Heart right ventricle (tissue), 16 donors: ENCODE measurements at regions of chrX and their contacts with region 1.

Region 1: DNA sequence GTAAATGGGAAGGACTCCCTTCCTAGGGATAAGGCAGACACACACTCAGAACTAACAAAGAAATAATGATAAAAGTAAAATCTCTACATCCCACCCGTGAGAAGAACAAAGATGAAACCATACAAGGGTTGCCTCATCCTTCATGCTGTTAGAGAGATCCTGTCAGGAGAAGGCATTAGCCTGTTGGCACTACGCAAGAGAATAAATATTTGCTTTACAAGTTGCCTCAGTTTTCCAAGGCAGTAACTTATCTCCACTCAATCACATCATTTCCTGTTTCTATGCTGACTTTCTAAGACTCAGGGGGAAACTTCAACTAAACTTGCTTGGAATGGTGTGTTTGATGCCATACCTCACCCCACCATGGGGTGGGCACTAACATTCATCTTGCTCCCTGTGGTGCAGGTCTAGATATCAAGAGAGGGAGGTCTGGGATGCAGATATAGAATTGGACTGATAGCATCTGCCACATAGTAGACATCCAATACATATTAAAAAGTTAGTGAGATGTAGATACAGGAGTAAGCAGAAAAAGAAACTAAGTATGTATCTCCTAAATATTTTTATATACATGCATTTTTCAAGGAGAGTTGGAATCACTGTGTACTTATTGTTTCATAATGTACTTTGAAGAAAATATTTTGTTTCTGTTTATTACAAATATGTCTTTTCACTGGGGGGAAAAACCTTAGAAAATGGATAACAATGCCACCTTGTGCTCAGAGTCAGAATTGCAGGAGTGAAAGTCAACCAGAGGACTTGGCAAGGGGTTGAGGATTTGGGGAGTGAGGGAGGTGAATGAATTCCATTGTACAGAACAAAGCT is 57.2 kb upstream of the BEX4 start:
- DNase-seq: peak in 1 of 2 donors; percentile 13
- ATAC-seq: no peak
- H3K4me3 ChIP-seq: no peak overlapping the region
- H3K27ac ChIP-seq: no peak overlapping the region
- H3K4me1 ChIP-seq: no peaks in the 10 kb centered on the region
- H3K27me3 ChIP-seq: peaks cover 0 to 14% (median 0%) of the 10 kb centered on the region in 7 donors
- CTCF ChIP-seq: peak in 8 of 9 donors; percentile 8 to 73 (median 58)

Region 2: GRCh38 chrX:102950908-102951866 is 206.5 kb before region 1 on chrX:
- intact Hi-C with region 1: loop called in 5 of 10 experiments (anchors 5 to 10 kb)
- DNase-seq: peak in 1 of 2 donors; percentile 26
- ATAC-seq: peak in 2 of 8 donors; percentile 39 to 57
- H3K4me3 ChIP-seq: peak overlapping the region in 4 of 10 donors; percentile 8 to 22 (median 18)
- H3K27ac ChIP-seq: no peak overlapping the region
- H3K4me1 ChIP-seq: no peaks in the 10 kb centered on the region
- H3K27me3 ChIP-seq: peaks cover 0 to 38% (median 0%) of the 10 kb centered on the region in 7 donors
- CTCF ChIP-seq: peak; percentile 16 to 67 (median 55)